ENCODE measurements at regions of chr1 and their contacts with region 1.

Region 1: GRCh38 chr1:150561974-150562445 is 12.8 kb downstream of the ADAMTSL4 start:
- DNase-seq: peak; percentile 98
- H3K4me3 ChIP-seq: peak overlapping the region; percentile 39 to 59 (median 56)
- H3K27ac ChIP-seq: peak overlapping the region; percentile 95 to 99 (median 98)
- H3K4me1 ChIP-seq: peaks cover 0 to 93% (median 81%) of the 10 kb centered on the region in 4 donors
- H3K27me3 ChIP-seq: no peaks in the 10 kb centered on the region
- CTCF ChIP-seq: no peak
- EP300 ChIP-seq: peak in 3 of 4 donors; percentile 68 to 95 (median 88)
- POLR2A ChIP-seq: peak in 1 of 2 donors; percentile 23

Region 2: DNA sequence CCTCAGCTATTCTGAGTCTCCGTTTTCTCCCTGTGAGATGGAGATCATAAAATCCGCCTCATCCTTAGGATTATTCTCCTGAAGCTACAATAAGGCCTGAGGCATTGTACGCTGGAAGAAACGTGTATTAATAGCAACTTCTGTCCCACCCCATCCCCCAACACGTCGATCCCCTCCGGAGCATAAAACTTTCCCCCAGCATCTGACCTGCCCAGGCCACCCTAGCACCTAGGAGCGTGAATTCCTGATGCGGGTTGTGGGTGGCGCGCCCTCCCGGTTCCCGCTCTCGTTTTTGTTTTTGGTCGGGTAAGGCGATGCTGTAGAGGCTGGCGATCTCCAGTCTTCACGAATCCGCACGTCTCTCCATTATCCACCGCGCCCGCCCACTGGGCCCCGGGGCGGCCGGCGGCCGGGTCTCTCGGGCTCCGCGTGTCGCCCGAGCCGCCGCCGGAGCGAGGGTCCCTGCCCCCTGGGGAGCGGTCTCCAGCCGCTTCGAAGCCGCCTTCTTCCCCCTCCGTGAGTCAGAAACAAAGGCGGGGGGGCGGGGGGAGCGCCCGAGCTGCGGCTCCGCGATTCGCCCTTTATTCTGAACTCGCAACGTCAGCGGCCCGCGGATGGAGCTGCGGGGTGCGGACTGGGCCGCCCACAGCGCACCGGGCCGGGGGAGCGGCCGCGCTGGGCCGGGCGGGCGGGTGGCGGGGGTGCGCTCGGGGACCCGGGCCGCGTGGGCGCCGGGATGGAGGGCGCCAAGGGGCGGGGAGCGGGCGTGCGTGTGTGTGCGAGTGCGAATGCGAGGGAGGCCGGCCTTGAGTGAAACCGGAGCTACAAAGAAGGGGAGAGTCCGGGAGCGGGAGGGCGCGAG is 412.5 kb before region 1 on chr1 and contains the start of gene PLEKHO1:
- intact Hi-C with region 1: loop called (anchors 5 kb)
- DNase-seq: peak; percentile 96
- H3K4me3 ChIP-seq: peak within 1 kb of the TSS; percentile 73 to 98 (median 96)
- H3K27ac ChIP-seq: peak within 1 kb of the TSS; percentile 98 to 100 (median 99)
- H3K4me1 ChIP-seq: peaks cover 0 to 44% (median 28%) of the 10 kb centered on the region in 4 donors
- H3K27me3 ChIP-seq: no peaks in the 10 kb centered on the region
- CTCF ChIP-seq: no peak
- EP300 ChIP-seq: peak in 1 of 4 donors; percentile 26
- POLR2A ChIP-seq: peak; percentile 54 to 79
- total RNA-seq, gene PLEKHO1: 251 to 402 (median 338) TPM

Region 3: GRCh38 chr1:150621497-150622302 is 59.7 kb after region 1 on chr1:
- intact Hi-C with region 1: loop called (anchors 1 kb)
- DNase-seq: peak; percentile 82
- H3K4me3 ChIP-seq: no peak overlapping the region
- H3K27ac ChIP-seq: peak overlapping the region; percentile 61 to 78 (median 74)
- H3K4me1 ChIP-seq: peaks cover 0 to 40% (median 36%) of the 10 kb centered on the region in 4 donors
- H3K27me3 ChIP-seq: no peaks in the 10 kb centered on the region
- CTCF ChIP-seq: peak; percentile 47 to 87 (median 72)
- EP300 ChIP-seq: no peak
- POLR2A ChIP-seq: no peak

Region 4: GRCh38 chr1:150876119-150876454 is 314.1 kb after region 1 on chr1:
- intact Hi-C with region 1: loop called (anchors 5 kb)
- DNase-seq: no peak
- H3K4me3 ChIP-seq: peak overlapping the region; percentile 71 to 100 (median 91)
- H3K27ac ChIP-seq: peak overlapping the region; percentile 92 to 100 (median 96)
- H3K4me1 ChIP-seq: peaks cover 0 to 25% (median 16%) of the 10 kb centered on the region in 4 donors
- H3K27me3 ChIP-seq: no peaks in the 10 kb centered on the region
- CTCF ChIP-seq: no peak
- EP300 ChIP-seq: no peak
- POLR2A ChIP-seq: no peak

Region 5: GRCh38 chr1:150979092-150980056 is 417.4 kb after region 1 on chr1:
- intact Hi-C with region 1: loop called (anchors 2 kb)
- DNase-seq: peak; percentile 93
- H3K4me3 ChIP-seq: peak overlapping the region in 1 of 4 donors; percentile 34
- H3K27ac ChIP-seq: peak overlapping the region; percentile 53 to 97 (median 80)
- H3K4me1 ChIP-seq: peaks cover 0 to 32% (median 22%) of the 10 kb centered on the region in 4 donors
- H3K27me3 ChIP-seq: no peaks in the 10 kb centered on the region
- CTCF ChIP-seq: peak; percentile 97 to 100 (median 98)
- EP300 ChIP-seq: no peak
- POLR2A ChIP-seq: no peak

Measured in sigmoid colon (tissue), 7 donors.